ENCODE measurements at regions of chr17 and their contacts with region 1.

Region 1: DNA sequence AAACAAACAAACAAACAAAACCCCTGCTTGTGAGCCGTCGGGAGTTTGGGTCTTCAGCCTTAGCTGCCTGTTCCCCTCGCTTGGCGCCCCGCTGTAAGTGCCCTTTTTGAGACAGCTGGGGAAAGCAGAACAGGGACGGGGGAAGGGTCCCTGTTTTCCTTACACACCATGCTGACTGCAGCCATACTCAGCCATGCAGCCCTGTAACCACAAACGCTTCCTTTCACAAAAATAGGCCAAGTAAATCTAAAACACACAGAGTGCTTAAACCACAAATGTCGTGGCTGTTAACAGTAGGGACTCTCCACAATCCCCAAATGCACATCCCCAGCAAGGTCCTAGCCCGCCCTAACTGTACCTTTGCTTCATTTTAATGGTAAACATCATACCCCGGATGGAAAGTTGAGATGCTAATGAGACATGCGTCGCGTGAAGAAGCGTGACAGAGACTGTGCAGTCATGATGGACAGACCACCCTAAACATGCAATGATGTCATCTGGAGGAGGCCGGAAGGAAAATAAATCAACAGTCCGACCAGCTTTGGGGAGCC is 129.9 kb downstream of the MGAT5B start:
- DNase-seq: peak; percentile 69
- ATAC-seq: peak; percentile 91
- H3K4me3 Mint-ChIP-seq: peak overlapping the region; percentile 34
- H3K27ac Mint-ChIP-seq: peak overlapping the region; percentile 91
- H3K4me1 Mint-ChIP-seq: peaks cover 48% of the 10 kb centered on the region
- H3K27me3 Mint-ChIP-seq: no peaks in the 10 kb centered on the region

Region 2: DNA sequence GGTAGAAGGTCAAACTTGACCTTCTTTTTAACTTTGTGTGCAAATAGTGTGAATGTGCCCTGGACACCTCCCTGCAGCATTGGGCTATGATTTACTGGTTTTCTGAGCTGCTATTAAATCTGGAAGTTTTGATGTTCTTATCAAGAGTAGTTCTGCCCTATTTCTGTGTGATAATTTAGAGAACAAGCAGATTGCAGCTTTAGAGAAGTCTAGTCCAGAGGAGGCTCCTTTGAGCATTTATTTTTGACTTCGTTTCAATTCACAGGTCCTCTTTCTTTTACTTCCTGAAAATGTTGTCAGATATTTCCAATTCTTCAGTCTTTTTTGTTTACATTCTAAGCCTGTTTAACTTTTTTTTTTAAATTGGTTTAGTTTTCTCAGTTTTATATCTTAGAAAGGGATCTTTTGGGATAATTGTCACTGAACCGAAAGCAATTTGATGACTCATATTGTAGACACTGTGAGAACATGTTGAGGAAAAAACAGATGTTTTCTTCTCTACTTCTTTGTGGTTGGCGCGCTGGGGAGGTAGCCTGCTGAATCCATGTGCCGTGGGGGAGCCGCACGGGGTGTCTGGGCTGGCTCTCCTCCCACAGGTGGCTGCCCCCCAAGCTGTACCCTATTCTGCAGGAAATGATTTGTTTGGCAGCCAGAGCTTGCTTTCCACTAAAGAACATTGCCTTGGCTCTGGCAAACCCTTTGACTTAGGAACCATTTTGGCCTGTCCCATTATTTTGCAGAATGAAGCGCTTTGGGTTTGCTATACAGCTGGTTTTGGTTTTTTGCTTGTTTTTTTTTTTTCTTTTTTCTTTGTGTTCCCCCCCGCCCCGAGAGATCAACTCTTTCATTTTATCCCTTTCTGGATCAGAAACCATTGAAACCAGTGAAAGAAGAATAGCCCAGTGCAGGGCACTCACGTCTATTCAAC is 206.7 kb before region 1 on chr17:
- CTCF ChIA-PET with region 1: no interaction called
- POLR2A ChIA-PET with region 1: interaction called, 13 read pairs
- intact Hi-C with region 1: no loop called
- DNase-seq: peak; percentile 73
- ATAC-seq: peak; percentile 89
- H3K4me3 Mint-ChIP-seq: peak overlapping the region; percentile 12
- H3K27ac Mint-ChIP-seq: no peak overlapping the region
- H3K4me1 Mint-ChIP-seq: peaks cover 10% of the 10 kb centered on the region
- H3K27me3 Mint-ChIP-seq: no peaks in the 10 kb centered on the region

Region 3: DNA sequence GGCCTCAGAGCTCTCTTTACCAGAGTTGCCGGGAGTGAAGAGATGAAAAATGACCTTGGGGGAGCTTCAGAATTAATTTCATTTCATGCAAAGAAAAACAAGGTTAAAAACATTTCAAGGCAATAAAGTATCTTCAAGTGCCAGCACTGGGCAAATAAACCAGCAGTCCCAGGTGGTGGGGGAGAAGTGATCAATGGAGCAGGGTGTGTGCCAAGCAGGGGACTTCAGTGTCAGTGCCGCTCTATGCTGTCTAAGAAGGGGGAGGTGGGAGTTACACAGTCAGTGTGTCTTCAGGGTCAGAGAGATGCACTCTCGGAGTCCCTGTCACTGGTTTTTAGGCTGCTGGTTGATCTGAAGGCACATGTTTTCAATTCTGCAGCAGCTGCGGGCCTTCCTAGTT is 187.1 kb before region 1 on chr17:
- CTCF ChIA-PET with region 1: no interaction called
- POLR2A ChIA-PET with region 1: no interaction called
- intact Hi-C with region 1: no loop called
- DNase-seq: no peak
- ATAC-seq: no peak
- H3K4me3 Mint-ChIP-seq: no peak overlapping the region
- H3K27ac Mint-ChIP-seq: no peak overlapping the region
- H3K4me1 Mint-ChIP-seq: no peaks in the 10 kb centered on the region
- H3K27me3 Mint-ChIP-seq: no peaks in the 10 kb centered on the region

Region 4: GRCh38 chr17:76968707-76969597 is 29.1 kb before region 1 on chr17:
- CTCF ChIA-PET with region 1: no interaction called
- POLR2A ChIA-PET with region 1: no interaction called
- intact Hi-C with region 1: loop called in 1 of 2 experiments (anchors 2 kb)
- DNase-seq: peak; percentile 75
- ATAC-seq: peak; percentile 82
- H3K4me3 Mint-ChIP-seq: peak overlapping the region; percentile 62
- H3K27ac Mint-ChIP-seq: peak overlapping the region; percentile 60
- H3K4me1 Mint-ChIP-seq: peaks cover 15% of the 10 kb centered on the region
- H3K27me3 Mint-ChIP-seq: peaks cover 2% of the 10 kb centered on the region

Region 5: DNA sequence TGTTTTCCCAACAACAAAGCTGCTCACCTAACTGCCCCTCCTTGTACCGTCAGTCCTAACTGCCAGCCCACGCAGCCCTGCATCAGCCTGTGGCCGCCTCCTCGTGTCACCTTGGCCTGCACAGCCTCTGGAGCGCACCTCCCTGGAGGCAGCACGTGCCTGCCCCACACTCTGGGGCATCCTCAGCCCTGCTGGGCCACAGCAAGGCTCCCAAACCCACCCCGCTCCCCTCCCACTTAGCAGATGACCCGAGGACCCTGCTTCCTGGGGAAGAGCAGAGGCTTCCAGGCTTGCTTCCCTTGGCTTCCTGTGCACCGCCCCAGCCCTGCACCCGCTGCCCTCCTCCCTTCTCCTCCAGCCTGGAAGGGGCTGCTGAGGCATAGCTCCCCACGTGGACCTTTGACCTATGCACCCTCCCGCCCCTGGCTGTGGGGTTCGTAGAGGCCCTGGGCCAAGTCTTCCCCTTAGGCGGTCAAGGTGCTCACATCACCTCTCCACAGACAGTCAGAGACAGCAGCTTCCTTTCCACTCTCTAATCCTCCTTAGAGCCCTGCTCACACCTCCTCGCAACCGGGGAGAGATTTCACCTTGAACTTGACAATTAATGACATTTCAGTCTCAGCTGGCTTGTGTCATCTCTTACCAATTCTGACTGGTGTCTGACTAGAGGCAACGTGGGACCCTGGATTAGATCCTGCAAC is 14.8 kb before region 1 on chr17:
- CTCF ChIA-PET with region 1: no interaction called
- POLR2A ChIA-PET with region 1: no interaction called
- intact Hi-C with region 1: no loop called
- DNase-seq: peak; percentile 22
- ATAC-seq: no peak
- H3K4me3 Mint-ChIP-seq: no peak overlapping the region
- H3K27ac Mint-ChIP-seq: no peak overlapping the region
- H3K4me1 Mint-ChIP-seq: peaks cover 20% of the 10 kb centered on the region
- H3K27me3 Mint-ChIP-seq: no peaks in the 10 kb centered on the region